ENCODE measurements at regions of chr17 and their contacts with region 1.

Region 1: GRCh38 chr17:41278176-41278955 is 2.9 kb downstream of the KRTAP9-7 start:
- H3K4me3 Mint-ChIP-seq: no peak overlapping the region
- H3K27ac Mint-ChIP-seq: no peak overlapping the region
- H3K4me1 Mint-ChIP-seq: no peaks in the 10 kb centered on the region
- H3K27me3 Mint-ChIP-seq: peaks cover 12% of the 10 kb centered on the region

Region 2: GRCh38 chr17:41264599-41264998 is 13.8 kb before region 1 on chr17:
- intact Hi-C with region 1: loop called (anchors 1 kb)
- H3K4me3 Mint-ChIP-seq: no peak overlapping the region
- H3K27ac Mint-ChIP-seq: no peak overlapping the region
- H3K4me1 Mint-ChIP-seq: no peaks in the 10 kb centered on the region
- H3K27me3 Mint-ChIP-seq: peaks cover 20% of the 10 kb centered on the region

Region 3: DNA sequence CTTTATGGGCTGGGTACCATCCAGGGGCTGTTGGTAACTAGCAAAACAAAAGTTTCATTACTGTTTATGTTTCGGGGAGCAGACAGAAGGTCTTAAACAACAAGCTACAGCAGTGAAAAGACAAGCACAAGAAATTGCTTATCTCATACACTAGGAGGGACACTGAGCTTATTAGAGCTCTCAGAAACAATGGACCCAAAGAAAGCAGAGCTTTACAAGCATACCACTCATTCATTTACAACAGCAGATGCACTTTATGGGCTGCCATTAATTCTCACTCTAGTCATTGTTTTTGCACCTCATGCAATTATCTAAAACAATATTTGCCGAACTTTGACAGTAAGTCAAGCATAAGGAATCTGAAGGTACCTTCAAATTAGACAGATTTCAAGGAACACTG is 324.2 kb after region 1 on chr17:
- intact Hi-C with region 1: no loop called
- H3K4me3 Mint-ChIP-seq: no peak overlapping the region
- H3K27ac Mint-ChIP-seq: no peak overlapping the region
- H3K4me1 Mint-ChIP-seq: no peaks in the 10 kb centered on the region
- H3K27me3 Mint-ChIP-seq: peaks cover 19% of the 10 kb centered on the region